Dorsolateral prefrontal cortex (tissue), 120 donors: ENCODE measurements at regions of chr20 and their contacts with region 1.

Region 1: GRCh38 chr20:5448449-5449118 is 131.8 kb upstream of the PROKR2 start:
- DNase-seq: peak in 5 of 10 donors; percentile 30 to 70 (median 54)
- H3K4me3 ChIP-seq: no peak overlapping the region
- H3K27ac ChIP-seq: no peak overlapping the region
- H3K27me3 ChIP-seq: peaks cover 0 to 4% (median 0%) of the 10 kb centered on the region in 45 donors
- CTCF ChIP-seq: peak; percentile 56 to 83 (median 74)

Region 2: GRCh38 chr20:5126512-5127203 is 321.9 kb before region 1 on chr20 and contains the start of gene CDS2:
- intact Hi-C with region 1: loop called in 1 of 2 experiments (anchors 10 kb)
- DNase-seq: peak; percentile 99 to 100 (median 100)
- H3K4me3 ChIP-seq: peak within 1 kb of the TSS; percentile 68 to 99 (median 93)
- H3K27ac ChIP-seq: peak within 1 kb of the TSS; percentile 78 to 98 (median 94)
- H3K27me3 ChIP-seq: no peaks in the 10 kb centered on the region
- CTCF ChIP-seq: peak; percentile 50 to 97 (median 86)
- total RNA-seq, gene CDS2: 103 to 195 (median 145) TPM

Region 3: GRCh38 chr20:5205348-5206210 is 243.0 kb before region 1 on chr20:
- intact Hi-C with region 1: loop called (anchors 1 to 2 kb)
- DNase-seq: peak; percentile 74 to 91 (median 84)
- H3K4me3 ChIP-seq: no peak overlapping the region
- H3K27ac ChIP-seq: peak overlapping the region in 9 of 59 donors; percentile 0 to 55 (median 29)
- H3K27me3 ChIP-seq: no peaks in the 10 kb centered on the region
- CTCF ChIP-seq: peak; percentile 78 to 98 (median 95)

Region 4: GRCh38 chr20:5222919-5223634 is 225.5 kb before region 1 on chr20:
- intact Hi-C with region 1: loop called in 1 of 2 experiments (anchors 5 kb)
- DNase-seq: peak in 9 of 10 donors; percentile 30 to 81 (median 72)
- H3K4me3 ChIP-seq: no peak overlapping the region
- H3K27ac ChIP-seq: peak overlapping the region in 6 of 59 donors; percentile 39 to 51 (median 44)
- H3K27me3 ChIP-seq: no peaks in the 10 kb centered on the region
- CTCF ChIP-seq: peak; percentile 69 to 94 (median 88)